ENCODE measurements at regions of chr10 and their contacts with region 1.

Region 1: DNA sequence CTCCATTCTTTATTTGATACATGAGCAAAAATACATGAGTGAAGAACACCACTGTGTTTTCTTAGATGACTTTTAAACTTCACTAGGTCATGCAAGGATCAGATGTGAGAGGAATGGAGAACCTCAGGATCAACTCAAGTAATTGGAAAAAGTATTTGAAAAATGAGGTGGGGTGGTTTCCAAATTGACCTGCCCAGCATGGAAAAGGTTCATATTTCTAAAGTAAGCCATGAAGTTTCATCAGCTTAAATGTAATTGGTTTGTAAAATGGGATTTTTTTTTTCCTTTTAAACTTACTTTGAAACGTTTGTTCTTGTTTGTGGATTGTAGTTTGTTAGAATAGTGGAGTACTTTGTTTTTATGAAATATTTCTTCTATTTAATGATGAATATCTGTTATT is 134.8 kb downstream of the MLLT10 start:
- DNase-seq: no peak
- ATAC-seq: no peak
- H3K4me3 ChIP-seq: no peak overlapping the region
- H3K4me3 Mint-ChIP-seq: no peak overlapping the region
- H3K27ac ChIP-seq: no peak overlapping the region
- H3K27ac Mint-ChIP-seq: no peak overlapping the region
- H3K4me1 ChIP-seq: no peaks in the 10 kb centered on the region
- H3K4me1 Mint-ChIP-seq: peaks cover 44% of the 10 kb centered on the region
- H3K27me3 ChIP-seq: no peaks in the 10 kb centered on the region
- H3K27me3 Mint-ChIP-seq: no peaks in the 10 kb centered on the region
- CTCF ChIP-seq: no peak

Region 2: GRCh38 chr10:21617267-21617666 is 51.6 kb before region 1 on chr10:
- CTCF ChIA-PET with region 1: no interaction called
- POLR2A ChIA-PET with region 1: no interaction called
- intact Hi-C with region 1: no loop called
- DNase-seq: no peak
- ATAC-seq: no peak
- H3K4me3 ChIP-seq: no peak overlapping the region
- H3K4me3 Mint-ChIP-seq: no peak overlapping the region
- H3K27ac ChIP-seq: no peak overlapping the region
- H3K27ac Mint-ChIP-seq: no peak overlapping the region
- H3K4me1 ChIP-seq: peaks cover 7% of the 10 kb centered on the region
- H3K4me1 Mint-ChIP-seq: peaks cover 20% of the 10 kb centered on the region
- H3K27me3 ChIP-seq: no peaks in the 10 kb centered on the region
- H3K27me3 Mint-ChIP-seq: no peaks in the 10 kb centered on the region
- CTCF ChIP-seq: no peak

Region 3: DNA sequence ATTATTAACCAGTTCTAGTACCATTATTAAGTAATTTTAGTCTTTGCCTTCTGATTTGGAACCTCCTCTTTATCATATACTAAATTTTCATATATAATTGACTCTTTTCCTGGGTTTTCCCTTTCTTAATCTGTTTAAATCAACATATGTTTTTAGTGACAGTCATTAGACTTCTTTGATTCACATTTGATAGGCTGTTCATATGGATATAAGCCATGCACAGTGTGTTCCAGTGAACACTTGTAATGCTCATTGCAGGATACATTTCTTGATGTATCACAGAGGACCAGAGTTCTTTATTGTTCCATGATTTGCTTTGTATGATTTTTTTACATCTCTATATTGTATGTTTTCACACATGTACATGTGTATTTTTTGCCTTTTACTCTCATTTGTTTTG is 20.8 kb before region 1 on chr10:
- CTCF ChIA-PET with region 1: no interaction called
- POLR2A ChIA-PET with region 1: no interaction called
- intact Hi-C with region 1: loop called in 1 of 2 experiments (anchors 1 kb)
- DNase-seq: no peak
- ATAC-seq: no peak
- H3K4me3 ChIP-seq: no peak overlapping the region
- H3K4me3 Mint-ChIP-seq: no peak overlapping the region
- H3K27ac ChIP-seq: no peak overlapping the region
- H3K27ac Mint-ChIP-seq: no peak overlapping the region
- H3K4me1 ChIP-seq: peaks cover 10% of the 10 kb centered on the region
- H3K4me1 Mint-ChIP-seq: peaks cover 47% of the 10 kb centered on the region
- H3K27me3 ChIP-seq: no peaks in the 10 kb centered on the region
- H3K27me3 Mint-ChIP-seq: no peaks in the 10 kb centered on the region
- CTCF ChIP-seq: no peak

Measured in CD4-positive, alpha-beta T cell (primary cell).